Activated CD4-positive, alpha-beta memory T cell treated with anti-CD3 and anti-CD28 coated beads, Interleukin-2, amount 10 ng/mL, durations not matched to agents 7 days and 5 days (primary cell): ENCODE measurements at regions of chr1 and their contacts with region 1.

Region 1: DNA sequence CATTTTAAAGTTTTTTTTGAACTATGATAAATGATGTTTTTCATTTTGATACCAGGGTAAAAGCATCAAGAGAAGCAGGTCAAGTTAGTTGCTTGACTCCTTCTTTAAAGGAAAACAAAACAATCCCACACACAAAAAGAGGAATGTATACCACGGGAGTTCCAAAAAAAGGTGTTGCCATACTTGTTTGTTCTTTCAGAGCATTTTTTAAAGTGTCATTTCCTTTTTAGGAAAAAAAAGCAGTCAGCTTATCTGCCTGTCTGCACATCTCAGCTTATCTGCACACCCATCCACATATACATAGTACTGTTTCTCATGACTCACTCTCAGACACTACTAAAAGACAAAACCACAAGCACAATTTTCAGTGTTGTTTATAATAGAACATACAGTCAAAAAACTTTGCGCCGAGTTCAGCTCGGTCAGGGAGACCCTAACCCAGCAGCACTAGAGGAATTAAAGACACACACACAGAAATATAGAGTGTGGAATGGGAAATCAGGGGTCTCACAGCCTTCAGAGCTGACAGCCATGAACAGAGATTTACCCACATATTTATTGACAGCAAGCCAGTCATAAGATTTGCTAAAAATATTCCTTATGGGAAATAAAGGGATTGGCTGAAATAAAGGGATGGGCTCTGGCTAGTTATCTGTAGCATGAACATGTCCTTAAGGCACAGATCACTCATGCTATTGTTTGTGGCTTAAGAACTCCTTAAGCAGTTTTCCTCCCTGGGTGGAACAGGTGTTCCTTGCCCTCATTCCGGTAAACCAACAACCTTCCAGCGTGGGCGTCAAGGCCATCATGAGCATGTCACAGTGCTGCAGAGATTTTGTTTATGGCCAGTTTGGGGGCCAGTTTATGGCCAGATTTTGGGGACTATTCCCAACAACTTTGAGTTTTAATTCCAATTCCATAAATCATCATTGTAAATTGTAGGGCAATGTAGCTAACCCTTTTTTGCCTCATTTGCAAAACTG is 11.4 kb upstream of the MNDA start:
- DNase-seq: peak; percentile 33
- H3K4me3 Mint-ChIP-seq: peak overlapping the region; percentile 56
- H3K27ac Mint-ChIP-seq: peak overlapping the region; percentile 89
- H3K4me1 Mint-ChIP-seq: peaks cover 29% of the 10 kb centered on the region
- H3K27me3 Mint-ChIP-seq: no peaks in the 10 kb centered on the region

Region 2: DNA sequence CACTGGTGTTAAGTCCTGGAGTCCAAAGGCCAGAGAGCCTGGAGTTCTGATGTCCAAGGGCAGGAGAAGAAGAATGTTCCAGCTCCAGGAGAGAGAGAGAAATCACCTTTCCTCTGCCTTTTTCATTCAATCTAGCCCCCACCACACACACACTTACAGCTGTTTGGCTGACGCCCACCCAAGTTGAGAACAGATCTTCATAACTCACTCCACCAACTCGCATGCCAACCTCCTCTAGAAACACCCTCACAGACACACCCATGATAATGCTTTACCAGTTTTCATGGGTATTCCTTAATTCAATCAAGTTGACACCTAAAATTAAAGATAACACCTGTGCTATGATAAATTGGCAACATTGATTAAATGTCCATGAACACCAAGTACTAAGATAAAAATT is 53.4 kb after region 1 on chr1:
- CTCF ChIA-PET with region 1: no interaction called
- POLR2A ChIA-PET with region 1: no interaction called
- DNase-seq: no peak
- H3K4me3 Mint-ChIP-seq: no peak overlapping the region
- H3K27ac Mint-ChIP-seq: no peak overlapping the region
- H3K4me1 Mint-ChIP-seq: no peaks in the 10 kb centered on the region
- H3K27me3 Mint-ChIP-seq: no peaks in the 10 kb centered on the region

Region 3: DNA sequence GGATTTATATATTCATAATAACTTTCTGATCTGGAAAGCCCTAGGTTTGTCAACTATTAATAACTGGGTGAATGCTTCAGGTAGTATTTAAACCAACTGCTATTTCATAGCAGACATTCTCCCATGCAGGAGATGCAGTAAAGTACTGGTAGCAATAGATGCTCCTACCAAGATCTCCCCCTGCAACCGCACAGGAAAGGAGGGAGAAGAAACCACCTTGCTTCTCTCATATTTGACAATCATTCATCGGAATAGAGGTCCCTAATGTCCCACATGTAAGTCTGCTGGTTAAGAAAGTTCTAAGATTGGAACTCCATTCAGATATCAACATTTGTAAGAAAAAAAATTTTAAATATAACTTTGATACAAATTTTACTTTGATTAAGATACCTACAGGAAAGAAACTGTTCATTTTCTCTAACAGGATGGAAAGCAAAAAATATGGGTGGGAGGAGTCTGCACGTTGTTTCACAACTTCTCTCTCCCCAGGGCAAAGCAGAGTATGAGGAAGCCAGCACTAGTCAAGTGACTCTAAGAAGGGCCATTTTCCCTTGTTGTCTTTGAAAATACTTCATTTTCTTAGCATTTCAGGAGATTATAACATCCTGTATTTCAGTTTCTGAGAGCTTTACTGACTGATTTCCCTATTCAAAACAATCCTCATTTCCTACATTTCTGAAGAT is 111.4 kb after region 1 on chr1 and contains the start of gene PYHIN1:
- CTCF ChIA-PET with region 1: no interaction called
- POLR2A ChIA-PET with region 1: interaction called, 10 read pairs
- DNase-seq: peak; percentile 63
- H3K4me3 Mint-ChIP-seq: peak within 1 kb of the TSS; percentile 98
- H3K27ac Mint-ChIP-seq: peak within 1 kb of the TSS; percentile 95
- H3K4me1 Mint-ChIP-seq: peaks cover 36% of the 10 kb centered on the region
- H3K27me3 Mint-ChIP-seq: no peaks in the 10 kb centered on the region
- total RNA-seq, gene PYHIN1: 56.6 to 59.8 TPM

Region 4: DNA sequence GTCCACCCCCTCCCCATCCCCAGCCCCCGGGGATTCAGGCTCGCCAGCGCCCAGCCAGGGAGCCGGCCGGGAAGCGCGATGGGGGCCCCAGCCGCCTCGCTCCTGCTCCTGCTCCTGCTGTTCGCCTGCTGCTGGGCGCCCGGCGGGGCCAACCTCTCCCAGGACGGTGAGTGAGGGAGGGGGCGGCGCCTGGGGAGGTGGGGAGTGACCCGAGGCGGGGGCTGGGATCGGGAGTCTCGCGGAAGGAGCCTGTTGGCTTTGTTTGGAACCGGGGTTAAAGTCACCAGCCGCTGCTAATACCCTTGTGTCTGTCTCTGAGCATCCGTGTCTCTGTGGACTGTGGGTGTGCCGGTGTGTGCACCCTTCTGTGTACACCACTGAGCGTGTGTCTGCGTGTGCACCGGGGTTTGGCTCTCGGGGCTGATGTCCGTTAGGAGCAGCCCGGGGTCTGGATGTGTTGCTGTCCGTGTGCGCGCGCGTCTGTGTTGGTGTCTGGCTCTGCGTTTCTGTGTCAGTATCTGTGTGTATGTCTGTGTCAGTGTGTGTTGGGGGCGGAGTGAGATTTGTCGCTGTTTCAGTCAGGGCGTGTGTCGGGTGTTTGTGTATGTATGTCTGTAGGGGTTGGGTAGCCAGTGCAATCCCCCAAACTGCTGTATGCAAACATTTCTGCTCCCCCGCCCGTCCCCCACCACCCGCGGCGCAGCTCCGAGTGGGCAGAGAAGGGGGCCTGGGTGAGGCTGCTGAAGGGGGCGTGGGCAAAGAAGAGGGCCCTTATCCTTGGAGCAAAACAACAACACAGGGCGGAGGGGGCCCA is 352.1 kb after region 1 on chr1:
- CTCF ChIA-PET with region 1: no interaction called
- POLR2A ChIA-PET with region 1: no interaction called
- DNase-seq: no peak
- H3K4me3 Mint-ChIP-seq: no peak overlapping the region
- H3K27ac Mint-ChIP-seq: no peak overlapping the region
- H3K4me1 Mint-ChIP-seq: peaks cover 2% of the 10 kb centered on the region
- H3K27me3 Mint-ChIP-seq: peaks cover 58% of the 10 kb centered on the region